Endothelial cell of umbilical vein (primary cell): ENCODE measurements at regions of chr10 and their contacts with region 1.

Region 1: GRCh38 chr10:28676968-28677887 is at the start of gene BAMBI:
- DNase-seq: peak; percentile 92
- H3K4me3 ChIP-seq: peak within 1 kb of the TSS; percentile 30 to 78 (median 64)
- H3K27ac ChIP-seq: peak within 1 kb of the TSS; percentile 28
- H3K4me1 ChIP-seq: peaks cover 32% of the 10 kb centered on the region
- H3K27me3 ChIP-seq: peaks cover 18 to 36% of the 10 kb centered on the region in 2 experiments
- CTCF ChIP-seq: peak; percentile 62 to 69
- POLR2A ChIP-seq: peak; percentile 96
- total RNA-seq, gene BAMBI: 3.2 and 4.3 TPM in 2 replicates

Region 2: GRCh38 chr10:28532383-28533175 is 144.6 kb before region 1 on chr10 and contains the start of gene WAC:
- CTCF ChIA-PET with region 1: interaction called, 3 read pairs
- POLR2A ChIA-PET with region 1: no interaction called
- dilution Hi-C with region 1: no loop called
- intact Hi-C with region 1: loop called (anchors 2 kb)
- DNase-seq: peak; percentile 94
- H3K4me3 ChIP-seq: peak within 1 kb of the TSS; percentile 94 to 100 (median 100)
- H3K27ac ChIP-seq: peak within 1 kb of the TSS; percentile 89
- H3K4me1 ChIP-seq: peaks cover 19% of the 10 kb centered on the region
- H3K27me3 ChIP-seq: no peaks in the 10 kb centered on the region
- CTCF ChIP-seq: no peak
- POLR2A ChIP-seq: no peak
- total RNA-seq, gene WAC: 101 and 104 TPM in 2 replicates

Region 3: DNA sequence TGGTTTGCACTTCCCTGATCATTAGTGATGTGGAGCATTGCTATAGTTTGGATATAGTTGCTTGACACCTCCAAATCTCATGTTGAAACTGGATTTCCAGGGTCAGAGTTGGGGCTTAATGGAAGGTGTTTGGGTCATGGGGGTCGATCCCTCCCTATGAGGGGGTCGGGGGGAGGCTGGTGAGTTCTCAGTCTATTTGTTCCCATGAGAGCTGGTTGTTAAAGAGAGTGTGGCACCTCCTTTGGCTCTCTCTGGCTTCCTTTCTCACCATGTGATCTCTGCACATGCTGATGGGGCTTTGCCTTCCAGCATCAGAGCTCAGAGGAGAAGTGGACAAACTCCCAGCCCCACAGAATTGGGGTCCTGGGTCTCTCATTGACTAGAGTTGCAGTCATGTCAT is 36.7 kb before region 1 on chr10:
- CTCF ChIA-PET with region 1: no interaction called
- POLR2A ChIA-PET with region 1: no interaction called
- dilution Hi-C with region 1: no loop called
- intact Hi-C with region 1: no loop called
- DNase-seq: no peak
- H3K4me3 ChIP-seq: no peak overlapping the region
- H3K27ac ChIP-seq: no peak overlapping the region
- H3K4me1 ChIP-seq: no peaks in the 10 kb centered on the region
- H3K27me3 ChIP-seq: peaks cover 0 to 2% of the 10 kb centered on the region in 2 experiments
- CTCF ChIP-seq: no peak
- POLR2A ChIP-seq: no peak

Region 4: DNA sequence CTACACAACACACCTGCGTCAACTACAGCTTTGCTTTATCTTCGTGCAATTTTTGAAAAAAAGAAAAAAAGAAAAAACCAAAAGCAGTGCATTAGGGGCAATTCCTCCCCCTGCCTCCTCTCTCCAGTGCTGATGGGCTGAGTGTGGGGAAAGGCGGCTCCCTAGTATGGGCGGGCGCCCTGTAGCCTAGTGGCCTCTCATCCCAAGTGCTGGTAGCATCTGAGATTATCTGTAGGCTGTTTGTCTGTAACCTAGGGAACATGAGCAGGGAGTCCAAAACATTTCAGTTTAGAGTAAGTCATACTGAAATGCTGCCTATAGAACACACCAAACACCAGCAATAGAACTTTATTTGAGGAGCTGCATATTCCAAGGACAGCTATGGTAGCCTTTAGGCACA is 24.5 kb before region 1 on chr10:
- CTCF ChIA-PET with region 1: no interaction called
- POLR2A ChIA-PET with region 1: no interaction called
- dilution Hi-C with region 1: no loop called
- intact Hi-C with region 1: no loop called
- DNase-seq: no peak
- H3K4me3 ChIP-seq: no peak overlapping the region
- H3K27ac ChIP-seq: no peak overlapping the region
- H3K4me1 ChIP-seq: no peaks in the 10 kb centered on the region
- H3K27me3 ChIP-seq: no peaks in the 10 kb centered on the region
- CTCF ChIP-seq: no peak
- POLR2A ChIP-seq: no peak

Region 5: DNA sequence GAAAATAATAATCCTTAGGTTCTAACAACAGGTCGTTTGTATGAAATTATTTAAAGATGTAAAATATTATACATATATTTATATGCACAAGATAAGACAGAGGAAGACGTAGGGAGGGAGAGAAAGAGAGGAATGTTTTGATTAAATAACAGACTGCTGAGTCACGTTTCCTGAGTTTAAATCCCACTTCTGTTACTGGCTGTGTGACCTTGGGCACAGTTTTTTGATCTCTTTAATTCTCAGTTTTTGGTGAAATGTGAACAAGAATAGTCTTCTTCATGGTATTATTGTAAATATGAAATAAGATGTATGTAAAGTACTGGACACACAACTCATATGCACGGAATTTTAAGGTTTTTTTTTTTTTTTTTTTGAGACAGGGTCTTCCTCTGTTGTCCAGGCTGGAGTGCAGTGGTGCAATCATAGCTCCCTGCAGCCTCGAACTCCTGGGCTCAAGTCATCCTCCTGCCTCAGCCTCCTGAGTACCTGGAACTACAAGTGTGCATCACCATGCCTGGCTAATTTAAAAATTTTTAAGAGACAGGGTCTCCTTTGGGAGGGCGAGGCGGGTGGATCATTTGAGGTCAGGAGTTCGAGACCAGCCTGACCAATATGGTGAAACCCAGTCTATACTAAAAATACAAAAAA is 42.7 kb after region 1 on chr10:
- CTCF ChIA-PET with region 1: interaction called, 4 read pairs
- POLR2A ChIA-PET with region 1: no interaction called
- dilution Hi-C with region 1: no loop called
- intact Hi-C with region 1: loop called (anchors 2 kb)
- DNase-seq: peak; percentile 77
- H3K4me3 ChIP-seq: peak overlapping the region in 1 of 3 experiments; percentile 50
- H3K27ac ChIP-seq: peak overlapping the region; percentile 32
- H3K4me1 ChIP-seq: peaks cover 16% of the 10 kb centered on the region
- H3K27me3 ChIP-seq: no peaks in the 10 kb centered on the region
- CTCF ChIP-seq: no peak
- POLR2A ChIP-seq: no peak

Region 6: DNA sequence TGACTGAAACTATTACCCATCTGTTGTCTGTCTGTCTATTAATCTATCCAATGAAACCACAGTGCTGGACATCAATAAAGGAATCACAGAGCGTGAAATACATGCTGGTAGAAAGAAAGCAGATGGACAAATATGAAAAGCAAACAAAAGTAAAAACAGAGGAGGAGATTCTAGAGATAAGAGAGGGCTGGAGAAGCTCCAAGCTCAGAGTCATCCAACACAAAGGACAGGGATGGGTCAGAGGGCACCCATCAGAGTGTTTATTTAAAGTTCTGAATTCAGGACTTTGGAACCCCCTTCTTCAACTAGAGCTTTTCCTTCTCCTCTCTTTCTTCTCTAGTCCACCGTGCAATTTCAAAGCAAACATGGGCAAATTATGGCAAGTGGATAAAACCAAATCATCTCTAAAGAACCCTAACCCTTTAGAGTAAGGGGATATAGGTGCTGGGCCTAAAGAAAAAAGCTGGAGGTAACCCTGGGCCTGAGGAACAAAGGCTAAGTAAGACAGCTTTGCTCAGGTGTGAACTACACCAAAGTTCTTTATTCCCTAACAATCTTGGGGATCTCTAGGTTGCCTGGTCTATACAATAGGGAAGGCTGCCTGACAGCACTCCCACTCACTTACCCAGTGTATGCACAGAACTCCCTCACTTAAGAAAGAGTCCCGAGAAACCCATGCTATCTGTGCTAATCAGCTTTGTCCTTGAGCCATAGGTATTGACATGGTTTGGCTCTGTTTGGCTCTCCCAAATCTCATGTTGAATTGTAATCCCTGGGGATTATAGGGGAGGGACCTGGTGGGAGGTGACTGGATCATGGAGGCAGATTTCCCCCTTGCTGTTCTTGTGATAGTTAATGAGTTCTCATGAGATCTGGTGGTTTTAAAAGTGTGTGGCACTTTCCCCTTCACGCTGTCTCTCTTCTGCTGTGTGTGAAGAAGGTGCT is 97.1 kb after region 1 on chr10:
- CTCF ChIA-PET with region 1: no interaction called
- POLR2A ChIA-PET with region 1: no interaction called
- dilution Hi-C with region 1: no loop called
- intact Hi-C with region 1: no loop called
- DNase-seq: no peak
- H3K4me3 ChIP-seq: no peak overlapping the region
- H3K27ac ChIP-seq: no peak overlapping the region
- H3K4me1 ChIP-seq: no peaks in the 10 kb centered on the region
- H3K27me3 ChIP-seq: no peaks in the 10 kb centered on the region
- CTCF ChIP-seq: no peak
- POLR2A ChIP-seq: no peak

Region 7: DNA sequence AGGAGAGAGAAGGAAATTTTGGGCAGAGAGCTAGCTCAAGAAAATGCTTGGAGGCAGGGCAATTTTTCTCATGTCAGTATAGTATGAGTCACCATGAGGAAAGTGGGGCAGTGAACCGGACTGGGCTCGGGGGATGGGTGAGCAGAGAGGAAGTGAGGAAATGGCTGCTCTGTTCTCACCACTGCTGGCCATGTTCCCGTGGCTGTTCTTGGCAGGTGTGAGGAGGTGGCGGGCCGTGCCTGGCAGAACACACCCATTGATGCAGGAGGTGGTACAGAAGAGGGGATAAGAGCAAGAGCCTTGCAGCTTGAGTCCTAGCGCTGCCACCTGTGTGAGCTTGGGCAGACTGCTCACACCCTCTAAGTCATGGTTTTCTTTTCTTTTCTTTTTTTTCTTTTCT is 307.2 kb after region 1 on chr10:
- CTCF ChIA-PET with region 1: interaction called, 18 read pairs
- POLR2A ChIA-PET with region 1: no interaction called
- dilution Hi-C with region 1: no loop called
- intact Hi-C with region 1: loop called (anchors 1 kb)
- DNase-seq: peak; percentile 93
- H3K4me3 ChIP-seq: no peak overlapping the region
- H3K27ac ChIP-seq: no peak overlapping the region
- H3K4me1 ChIP-seq: peaks cover 7% of the 10 kb centered on the region
- H3K27me3 ChIP-seq: peaks cover 0 to 2% of the 10 kb centered on the region in 2 experiments
- CTCF ChIP-seq: no peak
- POLR2A ChIP-seq: no peak

Region 8: DNA sequence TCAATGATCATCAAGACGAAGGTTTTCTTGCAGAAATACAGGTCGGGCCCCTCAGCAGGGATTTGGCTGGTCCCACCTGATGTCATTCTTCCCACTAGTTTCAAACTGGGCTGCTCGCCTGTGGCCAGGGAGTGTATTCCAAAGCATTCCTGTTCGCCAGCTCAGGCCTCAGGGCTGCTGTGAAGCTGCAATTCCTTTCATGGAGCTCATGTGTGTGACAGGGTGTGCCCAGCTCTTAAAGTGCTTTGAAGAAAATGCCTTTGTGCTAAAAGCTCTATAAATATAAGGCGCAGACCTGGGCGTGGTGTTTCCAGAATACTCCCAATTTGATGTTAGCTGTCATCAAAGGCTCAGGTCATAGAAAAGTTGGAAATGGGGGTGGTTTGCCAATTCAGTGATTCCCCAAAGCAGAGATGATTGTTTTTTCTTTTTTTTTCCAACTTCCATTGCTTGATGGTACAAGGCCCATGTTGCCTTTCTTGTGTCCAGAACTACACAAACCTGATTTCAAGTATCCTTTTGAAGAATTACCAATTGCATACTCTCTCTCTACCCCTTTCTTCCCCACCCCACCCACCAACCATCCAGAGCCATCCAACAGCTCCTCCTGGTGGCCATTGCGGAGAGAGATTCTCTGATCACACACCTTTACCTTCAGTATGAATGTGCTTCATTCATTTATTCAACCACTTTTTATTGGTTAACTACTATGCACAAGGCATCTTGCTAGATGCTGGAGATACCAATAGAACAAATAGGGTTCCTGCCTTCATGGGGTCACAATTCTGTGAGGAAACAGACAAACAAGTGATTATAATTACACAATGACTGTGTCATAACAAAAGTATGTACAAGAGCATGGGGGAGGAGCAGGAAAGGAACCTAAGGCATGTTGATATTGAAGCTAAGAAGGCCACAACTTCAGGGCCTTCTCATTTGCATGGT is 314.4 kb after region 1 on chr10:
- CTCF ChIA-PET with region 1: interaction called, 94 read pairs
- POLR2A ChIA-PET with region 1: no interaction called
- dilution Hi-C with region 1: no loop called
- intact Hi-C with region 1: loop called (anchors 1 kb)
- DNase-seq: peak; percentile 51
- H3K4me3 ChIP-seq: no peak overlapping the region
- H3K27ac ChIP-seq: no peak overlapping the region
- H3K4me1 ChIP-seq: no peaks in the 10 kb centered on the region
- H3K27me3 ChIP-seq: peaks cover 0 to 4% of the 10 kb centered on the region in 2 experiments
- CTCF ChIP-seq: peak; percentile 70 to 80
- POLR2A ChIP-seq: no peak